CD4-positive, alpha-beta memory T cell (primary cell): ENCODE measurements at regions of chr9 and their contacts with region 1.

Region 1: DNA sequence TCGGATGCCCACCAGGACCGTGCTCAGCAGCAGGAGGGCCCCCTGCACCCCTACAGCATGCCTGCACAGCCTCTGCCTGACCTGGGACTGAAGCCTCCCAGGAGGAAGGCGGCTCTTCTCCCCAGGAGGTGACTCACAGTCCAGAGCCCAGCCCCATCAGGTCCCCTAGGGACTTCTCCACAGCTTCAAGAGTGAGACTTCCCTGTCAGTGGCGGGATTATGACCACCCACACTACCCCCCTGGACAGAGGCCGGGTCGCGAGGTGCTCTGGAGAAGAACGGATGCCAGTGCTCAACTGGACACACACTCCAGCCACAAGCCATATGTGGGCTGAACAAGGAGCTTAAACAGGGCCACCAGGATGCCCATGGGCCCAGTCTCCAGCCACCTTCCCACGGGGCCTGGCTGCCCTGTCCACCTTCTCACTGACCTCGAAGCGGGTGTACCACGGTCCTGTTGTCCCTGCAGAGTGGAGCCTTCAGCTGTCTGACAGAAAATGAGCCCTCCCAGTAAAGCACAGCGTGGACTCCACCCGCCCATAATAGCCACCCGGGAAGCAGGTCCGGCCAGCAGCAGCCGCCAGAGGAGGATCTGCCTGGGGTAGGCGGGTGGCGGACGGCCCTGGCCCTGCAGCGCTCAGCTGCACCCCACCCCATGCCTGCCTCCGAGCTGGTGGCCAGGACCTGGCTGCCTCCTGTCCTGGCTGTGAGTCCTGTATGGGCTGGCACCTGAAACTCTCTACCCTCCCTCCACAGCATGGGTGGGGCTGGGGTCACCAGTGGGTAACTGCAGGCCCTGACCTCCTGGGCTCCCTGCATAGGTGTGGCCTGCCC is 54.7 kb downstream of the SEMA4D start:
- DNase-seq: no peak
- H3K4me3 ChIP-seq: no peak overlapping the region
- H3K4me3 Mint-ChIP-seq: peak overlapping the region in 2 of 8 donors; percentile 18 to 46
- H3K27ac ChIP-seq: peak overlapping the region; percentile 50
- H3K27ac Mint-ChIP-seq: peak overlapping the region; percentile 90 to 99 (median 99)
- H3K4me1 ChIP-seq: peaks cover 99% of the 10 kb centered on the region
- H3K4me1 Mint-ChIP-seq: peaks cover 68 to 94% (median 82%) of the 10 kb centered on the region in 4 donors
- H3K27me3 ChIP-seq: no peaks in the 10 kb centered on the region
- H3K27me3 Mint-ChIP-seq: no peaks in the 10 kb centered on the region

Region 2: DNA sequence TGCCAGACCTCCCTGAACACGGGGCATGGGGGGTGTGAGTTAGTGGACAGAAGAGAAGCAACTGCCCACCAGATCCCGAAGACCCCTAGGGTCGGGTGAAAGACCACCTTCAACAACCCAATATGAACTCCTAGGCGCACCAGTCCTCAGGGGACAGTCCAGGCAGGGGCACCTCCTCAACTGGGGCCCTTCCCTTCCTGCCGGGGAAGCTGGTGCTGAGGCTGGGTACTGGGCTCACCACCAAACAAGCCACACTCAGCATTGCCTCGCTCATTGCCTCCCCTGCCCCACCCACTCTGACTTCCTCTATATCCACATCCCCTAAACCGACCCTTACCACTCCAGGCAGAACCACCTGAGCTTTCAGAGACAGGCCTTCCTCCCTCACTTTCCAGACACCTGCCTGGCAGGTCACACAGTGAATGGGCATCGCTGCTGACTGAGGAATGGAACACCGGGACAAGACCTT is 12.2 kb after region 1 on chr9:
- CTCF ChIA-PET with region 1: interaction called, 3 read pairs
- POLR2A ChIA-PET with region 1: interaction called, 46 read pairs
- intact Hi-C with region 1: loop called (anchors 2 kb)
- DNase-seq: peak; percentile 50 to 72 (median 63)
- H3K4me3 ChIP-seq: peak overlapping the region in 1 of 2 donors; percentile 22
- H3K4me3 Mint-ChIP-seq: peak overlapping the region; percentile 72 to 90 (median 82)
- H3K27ac ChIP-seq: peak overlapping the region; percentile 68
- H3K27ac Mint-ChIP-seq: peak overlapping the region; percentile 92 to 98 (median 97)
- H3K4me1 ChIP-seq: peaks cover 97% of the 10 kb centered on the region
- H3K4me1 Mint-ChIP-seq: peaks cover 71 to 98% (median 87%) of the 10 kb centered on the region in 4 donors
- H3K27me3 ChIP-seq: no peaks in the 10 kb centered on the region
- H3K27me3 Mint-ChIP-seq: no peaks in the 10 kb centered on the region

Region 3: GRCh38 chr9:89461265-89461664 is 18.1 kb after region 1 on chr9:
- CTCF ChIA-PET with region 1: interaction called, 3 read pairs
- POLR2A ChIA-PET with region 1: interaction called, 609 read pairs
- intact Hi-C with region 1: loop called (anchors 2 kb)
- DNase-seq: peak in 1 of 5 donors; percentile 70
- H3K4me3 ChIP-seq: no peak overlapping the region
- H3K4me3 Mint-ChIP-seq: peak overlapping the region in 7 of 8 donors; percentile 36 to 80 (median 65)
- H3K27ac ChIP-seq: peak overlapping the region; percentile 45
- H3K27ac Mint-ChIP-seq: peak overlapping the region; percentile 78 to 98 (median 92)
- H3K4me1 ChIP-seq: peaks cover 100% of the 10 kb centered on the region
- H3K4me1 Mint-ChIP-seq: peaks cover 81 to 100% (median 95%) of the 10 kb centered on the region in 4 donors
- H3K27me3 ChIP-seq: no peaks in the 10 kb centered on the region
- H3K27me3 Mint-ChIP-seq: no peaks in the 10 kb centered on the region